Activated naive CD4-positive, alpha-beta T cell treated with anti-CD3 and anti-CD28 coated beads for 36 hours (primary cell): ENCODE measurements at regions of chr2 and their contacts with region 1.

Region 1: GRCh38 chr2:98134172-98135005 is 47.4 kb downstream of the VWA3B start:
- DNase-seq: peak; percentile 90
- H3K4me3 Mint-ChIP-seq: peak overlapping the region; percentile 37
- H3K27ac Mint-ChIP-seq: peak overlapping the region; percentile 84
- H3K4me1 Mint-ChIP-seq: peaks cover 29% of the 10 kb centered on the region
- H3K27me3 Mint-ChIP-seq: peaks cover 3% of the 10 kb centered on the region

Region 2: DNA sequence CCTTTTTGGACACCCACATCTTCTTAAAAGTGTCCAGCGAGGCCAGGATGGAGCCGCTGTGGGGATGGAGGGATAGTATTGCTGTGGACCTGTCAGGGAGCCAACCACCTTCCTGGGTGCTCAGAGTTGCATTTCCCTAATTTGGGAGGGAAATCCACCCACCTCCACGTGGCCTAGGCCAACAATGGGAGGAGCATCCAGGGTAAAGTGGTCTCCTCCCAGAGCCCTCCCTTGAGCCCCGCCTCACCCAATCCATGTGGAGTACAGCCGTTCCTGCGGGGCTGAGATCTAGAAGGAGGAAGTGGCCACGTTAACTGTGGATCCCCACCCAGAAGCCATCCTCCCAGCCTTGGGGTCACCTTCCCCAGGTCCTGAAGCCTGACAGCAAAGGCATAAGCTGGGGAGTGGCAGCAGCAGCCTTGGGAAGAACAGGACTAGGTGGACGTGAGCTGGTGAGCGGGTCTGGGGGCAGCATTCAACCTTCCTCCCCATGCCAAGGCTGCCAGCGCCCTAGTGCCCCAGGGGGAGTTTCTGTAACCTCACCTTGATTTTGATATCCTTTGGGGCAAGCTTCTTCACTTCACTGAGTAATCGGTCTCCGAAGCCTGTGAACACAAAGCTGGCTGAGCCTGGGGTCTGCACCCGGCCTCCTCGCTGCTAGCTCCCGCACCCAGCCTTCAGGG is 477.3 kb before region 1 on chr2:
- CTCF ChIA-PET with region 1: no interaction called
- intact Hi-C with region 1: no loop called
- DNase-seq: no peak
- H3K4me3 Mint-ChIP-seq: no peak overlapping the region
- H3K27ac Mint-ChIP-seq: no peak overlapping the region
- H3K4me1 Mint-ChIP-seq: peaks cover 15% of the 10 kb centered on the region
- H3K27me3 Mint-ChIP-seq: no peaks in the 10 kb centered on the region

Region 3: GRCh38 chr2:97995734-97996624 is 138.4 kb before region 1 on chr2 and contains the start of gene TMEM131:
- CTCF ChIA-PET with region 1: no interaction called
- intact Hi-C with region 1: loop called (anchors 1 kb)
- DNase-seq: peak; percentile 96
- H3K4me3 Mint-ChIP-seq: peak within 1 kb of the TSS; percentile 95
- H3K27ac Mint-ChIP-seq: peak within 1 kb of the TSS; percentile 93
- H3K4me1 Mint-ChIP-seq: peaks cover 32% of the 10 kb centered on the region
- H3K27me3 Mint-ChIP-seq: no peaks in the 10 kb centered on the region
- total RNA-seq, gene TMEM131: 18.5 to 19.2 TPM

Region 4: GRCh38 chr2:98086491-98087446 is 47.6 kb before region 1 on chr2 and contains the start of gene VWA3B:
- CTCF ChIA-PET with region 1: no interaction called
- intact Hi-C with region 1: loop called (anchors 2 kb)
- DNase-seq: peak; percentile 46
- H3K4me3 Mint-ChIP-seq: peak within 1 kb of the TSS; percentile 59
- H3K27ac Mint-ChIP-seq: peak within 1 kb of the TSS; percentile 28
- H3K4me1 Mint-ChIP-seq: peaks cover 32% of the 10 kb centered on the region
- H3K27me3 Mint-ChIP-seq: peaks cover 39% of the 10 kb centered on the region
- total RNA-seq, gene VWA3B: 0.43 TPM in 1 of 2 experiments, not detected in the other

Region 5: DNA sequence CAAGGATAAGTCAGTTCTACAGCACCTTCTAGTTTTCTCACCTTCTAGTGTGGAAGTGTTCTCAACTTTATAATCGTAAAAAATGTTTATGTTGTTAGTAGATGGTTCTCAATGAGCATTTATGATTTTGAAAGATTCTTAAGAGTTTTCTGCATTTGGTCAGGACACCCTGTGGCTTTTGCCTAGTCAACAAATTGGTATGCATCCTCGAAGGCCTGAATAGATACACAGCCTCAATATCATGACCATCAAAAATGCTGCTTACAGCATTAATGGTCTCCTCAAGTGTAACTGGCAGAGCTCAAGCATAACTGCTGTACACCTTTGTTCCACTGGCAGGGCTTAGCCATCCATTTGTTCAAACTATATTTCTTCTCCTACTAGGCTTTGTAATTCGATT is 704.9 kb after region 1 on chr2:
- CTCF ChIA-PET with region 1: no interaction called
- intact Hi-C with region 1: no loop called
- DNase-seq: no peak
- H3K4me3 Mint-ChIP-seq: no peak overlapping the region
- H3K27ac Mint-ChIP-seq: no peak overlapping the region
- H3K4me1 Mint-ChIP-seq: peaks cover 21% of the 10 kb centered on the region
- H3K27me3 Mint-ChIP-seq: no peaks in the 10 kb centered on the region